Activated B cell treated with CpG ODN at 0.5 μM for 24 hours (primary cell): ENCODE measurements at regions of chr7 and their contacts with region 1.

Region 1: DNA sequence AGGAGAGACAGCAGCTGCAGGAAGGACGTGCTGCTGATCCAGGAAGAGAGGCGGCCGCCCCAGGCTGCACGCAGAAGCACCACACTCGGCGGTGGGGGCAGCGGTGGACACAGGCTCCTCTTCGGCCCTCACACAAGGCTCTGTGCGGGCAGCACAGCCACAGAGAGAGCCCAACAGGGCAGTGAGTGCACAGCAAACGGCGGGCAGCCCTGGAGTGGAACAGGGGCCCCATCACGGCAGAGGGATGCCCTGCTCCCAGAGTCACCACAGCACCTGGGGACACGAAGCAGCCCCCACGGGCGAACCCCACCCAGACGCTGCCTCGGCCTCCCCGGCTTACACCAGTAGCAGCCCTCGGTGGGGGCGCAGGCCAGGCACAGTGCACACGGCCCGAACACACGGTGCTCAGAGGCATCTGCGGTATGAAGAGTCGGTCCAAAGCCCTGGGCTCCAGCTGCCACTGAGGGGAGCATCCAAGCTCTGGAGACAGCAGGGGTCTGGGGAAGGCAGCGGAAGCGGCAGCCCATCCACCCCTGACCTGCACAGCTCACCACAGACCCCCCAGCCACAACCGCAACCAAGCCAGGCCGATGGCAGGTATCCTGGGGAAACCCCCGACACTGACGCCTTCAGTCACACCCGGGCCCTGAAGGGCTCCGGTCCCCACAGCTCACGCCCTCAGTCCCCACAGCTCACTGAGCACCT is 16.8 kb downstream of the NUDT1 start:
- DNase-seq: peak; percentile 58
- ATAC-seq: peak; percentile 74
- H3K4me3 Mint-ChIP-seq: peak overlapping the region; percentile 55
- H3K27ac Mint-ChIP-seq: peak overlapping the region; percentile 89
- H3K4me1 Mint-ChIP-seq: peaks cover 54% of the 10 kb centered on the region
- H3K27me3 Mint-ChIP-seq: no peaks in the 10 kb centered on the region
- CTCF ChIP-seq: no peak

Region 2: GRCh38 chr7:876167-876967 is 1382.4 kb before region 1 on chr7 and contains the start of gene GET4:
- CTCF ChIA-PET with region 1: no interaction called
- POLR2A ChIA-PET with region 1: no interaction called
- intact Hi-C with region 1: no loop called
- DNase-seq: peak; percentile 98
- ATAC-seq: peak; percentile 79
- H3K4me3 Mint-ChIP-seq: peak within 1 kb of the TSS; percentile 91
- H3K27ac Mint-ChIP-seq: peak within 1 kb of the TSS; percentile 87
- H3K4me1 Mint-ChIP-seq: peaks cover 35% of the 10 kb centered on the region
- H3K27me3 Mint-ChIP-seq: no peaks in the 10 kb centered on the region
- CTCF ChIP-seq: no peak
- total RNA-seq, gene GET4: 40.5 and 41.4 TPM in 2 replicates

Region 3: DNA sequence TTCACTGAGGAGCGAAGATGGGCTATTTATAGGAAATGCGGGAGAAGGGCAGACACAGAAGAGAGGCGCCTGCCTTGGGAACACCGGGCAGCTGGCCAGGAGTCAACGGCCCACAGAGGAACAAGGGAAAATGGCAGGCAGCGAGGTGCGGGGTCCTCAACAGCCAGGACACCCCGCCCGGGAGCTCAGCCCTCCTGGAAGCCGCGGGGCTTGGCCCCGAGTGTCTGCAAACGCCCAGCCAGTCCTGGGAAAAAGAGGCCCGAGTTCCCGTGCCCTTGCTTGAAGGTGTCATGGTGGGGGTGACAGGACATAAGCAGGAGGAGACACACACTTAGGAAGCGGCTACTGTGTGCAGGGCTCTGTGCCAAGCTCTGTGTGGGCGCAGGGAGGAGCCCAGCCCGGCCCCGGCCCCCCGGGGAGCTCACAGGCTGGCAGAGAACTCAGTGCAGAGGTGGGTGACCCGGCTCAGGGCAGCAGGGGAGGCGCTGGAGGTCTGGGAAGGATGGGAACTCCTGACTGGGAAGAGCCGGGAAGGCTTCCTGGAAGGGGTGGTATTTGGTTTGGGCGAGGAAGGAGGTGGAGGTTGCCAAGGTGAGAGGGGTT is 508.8 kb before region 1 on chr7:
- CTCF ChIA-PET with region 1: no interaction called
- POLR2A ChIA-PET with region 1: no interaction called
- intact Hi-C with region 1: no loop called
- DNase-seq: no peak
- ATAC-seq: no peak
- H3K4me3 Mint-ChIP-seq: no peak overlapping the region
- H3K27ac Mint-ChIP-seq: no peak overlapping the region
- H3K4me1 Mint-ChIP-seq: peaks cover 15% of the 10 kb centered on the region
- H3K27me3 Mint-ChIP-seq: peaks cover 2% of the 10 kb centered on the region
- CTCF ChIP-seq: no peak

Region 4: DNA sequence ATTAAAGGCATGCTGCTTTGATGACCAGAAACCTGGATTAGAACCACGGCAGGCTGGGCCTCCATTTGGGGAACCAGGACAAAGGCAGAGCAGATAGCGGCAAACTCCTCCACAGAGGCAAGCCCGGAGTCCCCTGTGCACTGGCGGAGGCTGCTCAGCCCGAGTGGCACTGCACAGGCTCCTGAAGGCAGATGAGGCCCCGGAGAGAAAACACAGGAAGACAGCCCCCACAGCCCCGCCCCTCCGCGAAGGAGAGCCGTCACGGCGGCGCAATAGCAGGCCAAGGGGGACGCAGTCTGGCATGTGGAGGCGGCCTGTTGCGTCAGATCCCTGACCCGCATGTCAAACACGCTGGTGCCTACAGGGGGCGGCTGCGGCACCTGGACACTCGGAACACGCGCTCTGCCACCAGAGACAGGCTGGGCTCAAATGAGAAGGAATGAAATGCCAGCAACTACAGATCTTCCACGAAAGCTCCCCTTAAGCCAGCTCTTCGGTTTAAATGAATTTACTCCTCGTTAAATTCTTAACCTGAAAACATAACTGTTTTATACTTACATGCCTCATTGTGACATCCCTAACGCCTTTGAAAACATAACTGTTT is 154.6 kb before region 1 on chr7:
- CTCF ChIA-PET with region 1: no interaction called
- POLR2A ChIA-PET with region 1: no interaction called
- intact Hi-C with region 1: no loop called
- DNase-seq: peak; percentile 67
- ATAC-seq: peak; percentile 47
- H3K4me3 Mint-ChIP-seq: peak overlapping the region; percentile 61
- H3K27ac Mint-ChIP-seq: peak overlapping the region; percentile 71
- H3K4me1 Mint-ChIP-seq: peaks cover 41% of the 10 kb centered on the region
- H3K27me3 Mint-ChIP-seq: no peaks in the 10 kb centered on the region
- CTCF ChIP-seq: no peak

Region 5: DNA sequence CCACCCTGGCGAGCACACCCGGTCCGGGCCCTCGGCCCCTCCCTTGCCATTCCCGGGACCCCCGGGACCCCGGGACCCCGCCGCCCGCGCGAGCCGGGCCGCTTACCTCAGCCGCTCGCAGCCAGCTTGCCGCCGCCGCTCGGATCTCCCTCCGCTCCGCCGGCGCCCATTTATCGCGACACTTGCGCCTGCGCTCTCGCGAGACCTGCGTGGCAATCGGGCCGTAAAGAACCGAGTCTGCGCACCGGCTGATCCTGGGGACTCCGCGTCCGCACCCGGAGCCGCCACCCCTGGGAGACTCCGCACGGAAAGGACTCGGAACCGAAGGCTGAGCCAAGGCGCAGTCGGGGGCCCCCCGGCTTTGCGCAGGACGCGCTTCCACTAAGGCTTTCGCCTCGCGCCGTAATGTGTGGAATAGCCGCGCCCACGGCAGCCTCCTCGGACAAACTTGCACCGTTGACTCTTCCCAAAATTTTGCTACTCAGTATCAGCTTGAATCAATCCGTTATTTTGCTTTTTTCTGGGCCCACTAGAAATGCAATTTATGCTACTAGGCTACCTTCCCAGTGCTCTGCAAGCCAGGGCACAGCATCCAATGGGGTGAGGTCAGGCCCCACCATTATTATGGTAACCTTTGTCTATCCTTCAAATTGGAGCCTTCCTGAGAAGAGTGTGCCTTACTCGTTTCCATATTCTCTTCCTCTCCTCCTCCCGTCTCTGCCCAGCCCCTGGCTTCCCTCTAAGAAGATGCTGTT is 25.9 kb before region 1 on chr7 and contains the start of gene MAD1L1:
- CTCF ChIA-PET with region 1: interaction called, 5 read pairs
- POLR2A ChIA-PET with region 1: interaction called, 38 read pairs
- intact Hi-C with region 1: loop called (anchors 1 kb)
- DNase-seq: peak; percentile 88
- ATAC-seq: peak; percentile 68
- H3K4me3 Mint-ChIP-seq: peak within 1 kb of the TSS; percentile 90
- H3K27ac Mint-ChIP-seq: peak within 1 kb of the TSS; percentile 81
- H3K4me1 Mint-ChIP-seq: peaks cover 61% of the 10 kb centered on the region
- H3K27me3 Mint-ChIP-seq: no peaks in the 10 kb centered on the region
- CTCF ChIP-seq: no peak
- total RNA-seq, gene MAD1L1: 54.6 and 65.7 TPM in 2 replicates

Region 6: DNA sequence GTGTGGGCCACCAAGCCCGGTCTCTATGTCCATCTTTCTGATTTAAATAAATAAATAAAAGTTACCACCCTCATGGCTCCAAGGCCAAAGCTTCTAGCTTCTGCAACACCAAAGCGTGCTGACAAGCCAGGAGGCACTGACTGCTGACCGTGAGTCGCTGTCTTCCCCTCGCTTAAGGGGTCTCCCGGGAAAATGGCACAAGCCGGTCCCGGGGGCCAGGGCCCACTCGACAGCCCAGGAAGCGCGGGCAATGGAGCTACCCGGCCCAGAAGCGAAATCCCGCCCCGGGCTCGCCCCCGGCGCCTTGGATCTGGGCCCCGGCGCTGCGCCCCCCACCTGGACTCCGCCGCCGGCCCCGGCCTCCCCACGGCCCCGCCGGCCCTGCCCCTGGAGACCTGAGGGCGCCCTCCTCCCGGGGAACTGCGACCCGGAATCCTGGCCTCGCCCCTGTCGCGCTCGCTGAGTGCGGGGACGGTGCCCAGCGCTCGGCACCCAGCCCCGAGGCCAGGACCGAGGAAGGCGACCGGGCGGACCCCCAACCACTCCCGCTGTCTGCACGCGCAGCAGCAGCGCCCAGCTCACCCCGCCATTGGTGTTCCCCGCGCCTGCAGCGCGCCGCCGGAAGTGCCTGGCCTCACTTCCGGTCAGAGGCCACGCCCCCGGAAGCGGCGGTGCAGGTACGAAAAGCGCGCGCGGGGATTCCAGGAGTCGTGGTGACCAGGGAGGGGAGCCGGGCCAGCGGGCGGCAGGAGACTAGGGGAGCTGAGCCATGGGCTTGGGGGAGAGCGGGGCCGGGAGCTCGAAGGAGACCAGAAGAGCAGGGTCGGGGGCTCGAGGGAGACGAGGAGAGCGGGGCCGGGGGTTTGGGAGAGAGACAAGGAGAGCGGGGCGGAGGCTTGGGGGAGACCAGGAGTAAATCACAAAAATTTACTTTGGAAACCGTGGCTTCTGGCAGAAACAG is 17.0 kb before region 1 on chr7 and contains the starts of genes MRM2 and NUDT1:
- CTCF ChIA-PET with region 1: interaction called, 5 read pairs
- POLR2A ChIA-PET with region 1: interaction called, 38 read pairs
- intact Hi-C with region 1: loop called (anchors 1 kb)
- DNase-seq: peak; percentile 73
- ATAC-seq: peak; percentile 25
- H3K4me3 Mint-ChIP-seq: peak within 1 kb of the TSS; percentile 90
- H3K27ac Mint-ChIP-seq: peak within 1 kb of the TSS; percentile 89
- H3K4me1 Mint-ChIP-seq: peaks cover 71% of the 10 kb centered on the region
- H3K27me3 Mint-ChIP-seq: no peaks in the 10 kb centered on the region
- CTCF ChIP-seq: no peak
- total RNA-seq, gene MRM2: 35.3 and 36.5 TPM in 2 replicates
- total RNA-seq, gene NUDT1: 38.0 and 42.6 TPM in 2 replicates

Region 7: DNA sequence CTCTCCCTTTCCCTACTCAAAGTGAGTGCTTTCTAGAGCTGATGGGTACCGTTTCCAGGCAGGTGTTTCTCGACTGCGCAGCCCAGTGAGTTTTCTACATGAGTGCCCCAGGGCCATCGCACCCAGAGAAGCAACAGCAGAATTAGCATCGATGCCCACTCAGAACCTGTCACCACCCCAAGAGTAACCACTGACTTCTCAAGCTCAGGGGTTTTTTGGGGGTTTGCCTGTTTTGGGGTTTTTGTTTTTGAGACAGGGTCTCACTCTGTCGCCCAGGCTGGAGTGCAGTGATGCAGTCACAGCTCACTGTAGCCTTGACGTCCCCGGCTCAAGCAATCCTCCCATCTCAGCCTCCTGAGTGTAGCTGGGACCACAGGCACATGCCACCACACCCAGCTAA is 29.7 kb after region 1 on chr7:
- CTCF ChIA-PET with region 1: interaction called, 4 read pairs
- POLR2A ChIA-PET with region 1: interaction called, 9 read pairs
- intact Hi-C with region 1: loop called (anchors 1 kb)
- DNase-seq: peak; percentile 34
- ATAC-seq: peak; percentile 89
- H3K4me3 Mint-ChIP-seq: peak overlapping the region; percentile 73
- H3K27ac Mint-ChIP-seq: peak overlapping the region; percentile 97
- H3K4me1 Mint-ChIP-seq: peaks cover 49% of the 10 kb centered on the region
- H3K27me3 Mint-ChIP-seq: no peaks in the 10 kb centered on the region
- CTCF ChIP-seq: no peak

Region 8: DNA sequence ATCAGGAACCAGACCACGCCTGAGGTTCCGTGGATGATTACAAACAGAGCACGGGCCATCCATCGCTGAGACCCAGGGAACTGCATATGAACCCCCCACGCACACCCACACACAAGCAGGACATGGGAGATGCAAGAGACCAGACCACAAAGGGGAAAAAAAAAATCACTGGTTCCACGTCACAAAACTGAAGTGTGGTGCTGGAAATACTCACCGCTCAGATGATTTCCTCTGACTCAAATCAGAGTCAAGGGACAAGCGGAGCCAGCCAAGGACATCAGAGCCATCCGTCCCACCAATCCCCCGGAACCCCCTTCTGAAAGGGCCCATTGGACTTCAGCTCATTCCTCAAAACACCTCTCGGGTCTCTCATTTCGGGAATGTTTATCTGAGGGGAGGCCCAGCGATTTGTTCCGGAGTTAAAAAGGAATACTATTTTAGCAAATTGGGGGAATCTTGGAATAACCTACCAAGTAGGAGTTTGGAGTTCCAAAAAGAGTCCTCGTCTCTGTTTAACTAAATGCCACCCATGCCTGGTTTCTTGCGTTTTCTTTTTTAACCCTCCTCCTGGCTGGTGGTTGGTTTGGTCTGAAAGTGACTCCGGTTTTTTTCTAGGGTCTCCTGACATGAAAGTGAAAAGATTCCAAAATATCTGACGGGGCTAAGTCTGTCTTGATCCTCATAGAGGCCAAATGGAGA is 40.5 kb after region 1 on chr7:
- CTCF ChIA-PET with region 1: no interaction called
- POLR2A ChIA-PET with region 1: interaction called, 43 read pairs
- intact Hi-C with region 1: loop called (anchors 1 kb)
- DNase-seq: peak; percentile 49
- ATAC-seq: peak; percentile 72
- H3K4me3 Mint-ChIP-seq: peak overlapping the region; percentile 77
- H3K27ac Mint-ChIP-seq: peak overlapping the region; percentile 96
- H3K4me1 Mint-ChIP-seq: peaks cover 76% of the 10 kb centered on the region
- H3K27me3 Mint-ChIP-seq: no peaks in the 10 kb centered on the region
- CTCF ChIP-seq: no peak

Region 9: DNA sequence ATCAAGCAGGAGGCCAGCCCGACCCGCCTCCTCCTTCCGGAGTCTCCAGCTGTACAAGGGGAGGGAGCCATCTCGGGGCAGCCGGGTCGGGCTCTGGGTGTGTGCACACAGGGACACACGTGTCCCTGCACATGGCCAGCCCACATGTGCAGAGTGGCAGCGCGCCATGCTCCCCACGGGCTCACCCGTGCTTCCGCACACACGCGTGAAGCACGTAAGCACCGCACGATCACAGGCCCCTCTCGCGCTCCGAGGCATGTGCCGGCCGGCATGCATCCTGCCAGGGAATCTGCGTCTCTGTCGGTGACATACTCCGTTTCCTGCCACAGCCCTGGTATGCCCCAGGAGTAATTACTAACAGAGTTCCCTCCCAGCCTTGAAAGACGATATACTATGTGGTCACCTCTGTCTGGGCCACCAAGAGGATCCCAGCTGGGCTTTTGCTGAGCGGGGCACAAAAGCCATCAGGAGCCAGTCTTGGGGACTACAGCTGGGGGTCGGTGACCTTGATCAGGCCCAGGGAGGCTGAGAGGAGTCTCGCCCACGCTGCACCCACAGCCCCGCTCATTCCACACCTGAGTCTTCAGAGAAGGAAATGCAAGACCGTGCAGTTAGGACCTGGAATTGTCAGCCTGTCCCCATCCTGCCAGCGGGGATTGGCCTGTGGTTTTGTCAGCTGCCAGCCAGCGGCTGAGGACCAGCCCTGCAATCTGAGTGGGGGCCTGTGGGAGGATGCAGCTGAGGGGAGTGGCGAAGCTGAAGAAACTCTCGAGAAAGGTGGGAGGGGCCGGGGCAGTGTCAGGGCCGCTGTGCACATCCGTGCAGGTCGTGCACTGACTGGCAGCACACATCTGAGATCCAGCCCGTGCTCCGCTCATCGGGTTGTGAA is 249.8 kb after region 1 on chr7:
- CTCF ChIA-PET with region 1: no interaction called
- POLR2A ChIA-PET with region 1: no interaction called
- intact Hi-C with region 1: no loop called
- DNase-seq: peak; percentile 62
- ATAC-seq: peak; percentile 51
- H3K4me3 Mint-ChIP-seq: peak overlapping the region; percentile 65
- H3K27ac Mint-ChIP-seq: peak overlapping the region; percentile 95
- H3K4me1 Mint-ChIP-seq: peaks cover 68% of the 10 kb centered on the region
- H3K27me3 Mint-ChIP-seq: no peaks in the 10 kb centered on the region
- CTCF ChIP-seq: no peak